ENCODE measurements at regions of chr11 and their contacts with region 1.

Region 1: DNA sequence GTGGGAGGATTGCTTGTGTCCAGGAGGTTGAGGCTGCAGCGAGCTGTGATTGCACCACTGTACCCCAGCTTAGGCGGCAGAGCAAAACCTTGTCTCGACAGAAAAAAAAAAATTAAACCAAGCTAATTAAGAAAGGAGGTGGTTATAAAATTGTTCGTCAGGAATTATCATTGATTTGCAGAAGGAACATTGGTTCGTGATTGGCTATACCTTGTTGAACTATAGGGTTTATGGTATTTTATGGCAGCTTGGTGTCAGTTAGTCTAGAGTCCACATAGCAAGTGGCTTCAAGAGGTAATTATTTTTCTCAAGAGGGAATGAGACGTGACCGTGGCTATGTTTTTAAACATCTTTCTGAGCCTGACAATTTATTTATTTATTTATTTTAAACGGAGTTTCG is 11.5 kb upstream of the TMEM216 start:
- DNase-seq: no peak
- ATAC-seq: no peak
- H3K4me3 ChIP-seq: no peak overlapping the region
- H3K27ac ChIP-seq: no peak overlapping the region
- H3K4me1 ChIP-seq: peaks cover 6% of the 10 kb centered on the region
- H3K27me3 ChIP-seq: no peaks in the 10 kb centered on the region
- CTCF ChIP-seq: no peak

Region 2: DNA sequence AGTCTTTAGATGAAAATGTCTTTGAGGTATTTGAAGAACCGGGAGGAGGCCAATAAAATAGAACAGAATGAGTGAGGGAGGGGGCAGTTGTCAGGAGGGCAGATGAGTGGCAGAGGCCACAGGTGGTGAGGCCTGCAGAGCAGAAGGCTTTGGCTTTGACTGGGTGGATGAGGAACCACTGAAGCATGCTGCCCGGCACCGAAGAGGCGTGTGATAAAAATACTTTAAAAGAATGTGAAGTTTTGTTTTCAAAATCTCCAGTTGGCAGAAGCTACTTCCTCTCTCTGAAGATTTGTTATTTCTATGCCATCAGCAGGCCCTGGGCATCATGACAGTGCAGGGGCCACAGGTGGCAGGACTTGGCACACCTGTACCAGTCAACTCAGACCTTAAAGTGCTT is 882.0 kb before region 1 on chr11:
- intact Hi-C with region 1: no loop called
- DNase-seq: no peak
- ATAC-seq: peak; percentile 56
- H3K4me3 ChIP-seq: no peak overlapping the region
- H3K27ac ChIP-seq: no peak overlapping the region
- H3K4me1 ChIP-seq: no peaks in the 10 kb centered on the region
- H3K27me3 ChIP-seq: no peaks in the 10 kb centered on the region
- CTCF ChIP-seq: no peak

Region 3: DNA sequence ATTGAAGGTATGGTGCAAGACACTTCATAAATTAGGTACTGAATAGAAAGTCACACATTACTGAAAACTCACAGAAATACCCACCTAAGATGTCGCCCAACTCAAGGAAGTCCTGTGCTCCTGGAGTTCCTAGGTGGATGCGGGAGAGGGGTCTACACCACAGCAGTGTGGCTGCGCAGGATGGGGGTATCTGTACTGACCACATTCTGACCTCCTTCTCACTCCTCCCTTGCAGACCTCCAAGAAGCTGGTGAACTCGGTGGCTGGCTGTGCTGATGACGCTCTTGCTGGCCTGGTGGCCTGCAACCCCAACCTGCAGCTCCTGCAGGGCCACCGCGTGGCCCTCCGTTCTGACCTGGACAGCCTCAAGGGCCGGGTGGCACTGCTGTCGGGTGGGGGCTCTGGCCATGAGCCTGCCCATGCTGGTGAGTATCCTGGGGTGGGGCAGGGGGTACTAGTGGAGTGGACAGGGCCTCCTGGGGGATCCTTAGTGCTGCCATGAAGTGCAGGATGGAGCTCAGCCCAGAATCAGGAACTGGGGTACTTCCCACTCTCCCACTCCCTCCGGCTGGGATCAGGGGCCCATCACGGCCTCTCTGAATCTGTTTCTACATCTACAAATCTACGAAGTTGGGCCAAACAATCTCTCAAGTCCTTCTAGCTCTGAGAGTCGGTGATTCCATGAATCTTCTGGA is 43.0 kb before region 1 on chr11:
- intact Hi-C with region 1: loop called (anchors 2 kb)
- DNase-seq: no peak
- ATAC-seq: no peak
- H3K4me3 ChIP-seq: no peak overlapping the region
- H3K27ac ChIP-seq: no peak overlapping the region
- H3K4me1 ChIP-seq: peaks cover 9% of the 10 kb centered on the region
- H3K27me3 ChIP-seq: no peaks in the 10 kb centered on the region
- CTCF ChIP-seq: no peak

Region 4: DNA sequence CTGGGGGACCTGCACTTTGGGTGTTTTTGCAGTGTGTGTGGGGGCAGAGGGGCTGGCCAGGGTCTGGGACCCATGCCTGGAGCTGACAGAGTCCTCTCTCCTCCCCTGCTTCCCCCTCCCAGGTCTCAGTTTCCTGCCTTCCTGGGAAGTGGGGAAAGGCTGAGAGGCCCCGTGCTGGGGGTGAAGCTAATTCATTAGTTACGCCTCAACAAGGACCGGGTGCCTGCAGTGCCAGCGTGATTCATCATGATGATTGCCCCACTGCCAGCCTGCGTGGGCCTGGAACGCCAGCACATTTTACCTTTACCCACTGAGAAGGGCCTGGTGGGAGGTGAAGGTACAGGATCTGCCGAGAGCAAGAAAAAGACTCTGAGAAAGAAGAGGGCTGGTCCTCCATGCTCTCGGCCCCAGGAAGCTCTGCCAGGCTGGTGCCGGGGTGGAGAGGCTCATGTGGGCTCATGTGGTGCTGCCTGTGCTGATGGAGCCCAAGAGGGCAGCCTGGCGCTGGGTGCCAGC is 124.8 kb after region 1 on chr11:
- intact Hi-C with region 1: no loop called
- DNase-seq: no peak
- ATAC-seq: no peak
- H3K4me3 ChIP-seq: no peak overlapping the region
- H3K27ac ChIP-seq: no peak overlapping the region
- H3K4me1 ChIP-seq: peaks cover 18% of the 10 kb centered on the region
- H3K27me3 ChIP-seq: peaks cover 35% of the 10 kb centered on the region
- CTCF ChIP-seq: no peak

Region 5: GRCh38 chr11:61671527-61671926 is 290.6 kb after region 1 on chr11:
- intact Hi-C with region 1: no loop called
- DNase-seq: no peak
- ATAC-seq: peak; percentile 92
- H3K4me3 ChIP-seq: no peak overlapping the region
- H3K27ac ChIP-seq: no peak overlapping the region
- H3K4me1 ChIP-seq: no peaks in the 10 kb centered on the region
- H3K27me3 ChIP-seq: no peaks in the 10 kb centered on the region
- CTCF ChIP-seq: peak; percentile 36